Pancreas (tissue), 10 donors: ENCODE measurements at regions of chr17 and their contacts with region 1.

Region 1: GRCh38 chr17:82153745-82154375 is 55.8 kb upstream of the FASN start:
- DNase-seq: peak; percentile 55 to 92 (median 80)
- ATAC-seq: peak; percentile 84 to 95 (median 94)
- H3K4me3 ChIP-seq: no peak overlapping the region
- H3K27ac ChIP-seq: no peak overlapping the region
- H3K4me1 ChIP-seq: no peaks in the 10 kb centered on the region
- H3K27me3 ChIP-seq: no peaks in the 10 kb centered on the region
- CTCF ChIP-seq: peak; percentile 83 to 90 (median 88)

Region 2: DNA sequence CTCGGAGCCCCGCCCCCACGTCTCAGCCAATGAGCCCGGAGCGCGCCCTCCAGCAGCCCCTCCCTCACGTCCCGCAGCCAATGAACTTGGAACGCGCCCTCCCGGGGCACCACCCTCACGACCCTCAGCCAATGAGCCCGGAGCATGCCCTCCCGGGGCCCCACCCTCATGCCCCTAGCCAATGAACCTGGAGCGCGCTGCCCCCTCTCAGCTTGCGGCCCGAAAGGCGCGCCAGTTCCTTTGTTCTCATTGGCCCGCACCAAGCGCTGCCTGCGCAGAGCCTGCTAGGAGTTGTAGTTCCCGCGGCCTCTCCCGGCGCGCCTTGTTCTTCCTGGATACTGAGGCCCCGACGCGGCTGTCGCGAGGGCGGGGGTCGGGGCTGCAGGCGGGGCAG is 130.9 kb before region 1 on chr17 and contains the start of gene LRRC45:
- intact Hi-C with region 1: loop called (anchors 5 to 10 kb)
- DNase-seq: peak; percentile 99 to 100 (median 100)
- ATAC-seq: peak; percentile 89 to 95 (median 91)
- H3K4me3 ChIP-seq: peak within 1 kb of the TSS; percentile 92 to 96 (median 94)
- H3K27ac ChIP-seq: peak within 1 kb of the TSS in 3 of 4 donors; percentile 50 to 58 (median 57)
- H3K4me1 ChIP-seq: peaks cover 9 to 14% (median 14%) of the 10 kb centered on the region in 3 donors
- H3K27me3 ChIP-seq: no peaks in the 10 kb centered on the region
- CTCF ChIP-seq: no peak
- total RNA-seq, gene LRRC45: 5.3 to 9.9 (median 6.2) TPM

Region 3: GRCh38 chr17:82029990-82030469 is 123.8 kb before region 1 on chr17:
- intact Hi-C with region 1: loop called (anchors 5 to 10 kb)
- DNase-seq: no peak
- ATAC-seq: peak in 3 of 4 donors; percentile 2 to 20 (median 13)
- H3K4me3 ChIP-seq: no peak overlapping the region
- H3K27ac ChIP-seq: no peak overlapping the region
- H3K4me1 ChIP-seq: peaks cover 4 to 5% (median 4%) of the 10 kb centered on the region in 3 donors
- H3K27me3 ChIP-seq: no peaks in the 10 kb centered on the region
- CTCF ChIP-seq: no peak